T-cell (primary cell): ENCODE measurements at regions of chrX and their contacts with region 1.

Region 1: GRCh38 chrX:155216179-155216939 is at the start of gene VBP1:
- DNase-seq: peak; percentile 58 to 91 (median 84)
- ATAC-seq: peak; percentile 97 to 99 (median 98)
- H3K4me3 ChIP-seq: peak within 1 kb of the TSS; percentile 86 to 94
- H3K4me3 Mint-ChIP-seq: peak within 1 kb of the TSS; percentile 83 to 97 (median 94)
- H3K27ac ChIP-seq: peak within 1 kb of the TSS; percentile 76
- H3K27ac Mint-ChIP-seq: peak within 1 kb of the TSS; percentile 87 to 90
- H3K4me1 ChIP-seq: peaks cover 10 to 13% of the 10 kb centered on the region in 2 experiments
- H3K4me1 Mint-ChIP-seq: peaks cover 21 to 26% (median 25%) of the 10 kb centered on the region in 3 donors
- H3K27me3 ChIP-seq: no peaks in the 10 kb centered on the region
- H3K27me3 Mint-ChIP-seq: no peaks in the 10 kb centered on the region
- total RNA-seq, gene VBP1: 22.6 to 31.8 (median 26.0) TPM

Region 2: DNA sequence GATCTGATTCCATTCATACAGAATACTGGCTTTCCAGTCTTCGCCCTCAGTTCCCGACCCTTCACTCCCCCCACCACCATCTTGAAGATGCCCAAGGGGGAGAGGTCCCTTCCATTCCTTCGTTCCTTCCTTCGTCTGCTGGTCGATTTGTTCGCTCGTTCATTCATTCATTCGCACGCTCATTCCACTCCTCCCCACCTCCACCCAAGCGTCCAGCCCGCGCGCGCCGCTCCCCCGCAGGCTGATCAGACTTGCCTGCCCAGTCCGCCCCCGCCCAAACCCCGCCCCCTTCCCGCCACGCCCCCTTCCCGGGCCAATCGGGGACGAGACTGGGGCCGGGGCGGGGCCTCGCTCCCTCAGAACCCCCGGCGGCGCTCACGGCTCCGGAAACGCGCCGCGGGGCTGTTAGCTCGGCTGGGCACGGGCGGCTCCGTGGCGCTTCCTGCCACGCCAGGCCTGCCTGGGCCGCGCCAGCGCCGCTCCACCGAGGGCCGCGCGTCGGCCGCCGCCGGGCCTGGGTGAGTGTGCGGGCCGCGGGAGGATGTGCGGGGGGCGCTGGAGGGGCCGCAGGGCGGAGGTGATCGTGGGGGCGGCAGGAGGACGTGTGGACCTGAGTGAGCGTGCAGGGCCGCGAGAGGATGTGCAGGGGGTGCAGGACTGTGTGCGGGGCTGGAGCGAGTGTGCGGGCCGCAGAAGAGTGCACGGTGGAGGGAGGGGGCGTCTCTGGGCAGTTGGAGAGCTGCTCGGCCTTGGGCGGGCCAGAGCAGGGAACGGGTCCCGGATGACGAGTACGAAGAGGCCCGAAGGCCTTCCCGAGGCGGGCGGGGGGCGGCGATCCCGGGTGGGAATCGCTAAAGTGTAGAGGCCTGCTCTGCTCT is 1882.4 kb before region 1 on chrX and contains the start of gene ZNF275:
- CTCF ChIA-PET with region 1: interaction called in 1 of 2 experiments, 10 read pairs
- POLR2A ChIA-PET with region 1: no interaction called
- DNase-seq: peak; percentile 56 to 87 (median 72)
- ATAC-seq: peak; percentile 97 to 98 (median 97)
- H3K4me3 ChIP-seq: peak within 1 kb of the TSS; percentile 51 to 72
- H3K4me3 Mint-ChIP-seq: peak within 1 kb of the TSS; percentile 58 to 80 (median 76)
- H3K27ac ChIP-seq: no peak within 1 kb of the TSS
- H3K27ac Mint-ChIP-seq: peak within 1 kb of the TSS; percentile 52 to 65
- H3K4me1 ChIP-seq: peaks cover 10 to 37% of the 10 kb centered on the region in 2 experiments
- H3K4me1 Mint-ChIP-seq: peaks cover 40 to 45% (median 44%) of the 10 kb centered on the region in 3 donors
- H3K27me3 ChIP-seq: peaks cover 0 to 3% of the 10 kb centered on the region in 2 experiments
- H3K27me3 Mint-ChIP-seq: peaks cover 0 to 2% of the 10 kb centered on the region in 2 donors
- total RNA-seq, gene ZNF275: 14.4 to 17.6 (median 17.0) TPM

Region 3: DNA sequence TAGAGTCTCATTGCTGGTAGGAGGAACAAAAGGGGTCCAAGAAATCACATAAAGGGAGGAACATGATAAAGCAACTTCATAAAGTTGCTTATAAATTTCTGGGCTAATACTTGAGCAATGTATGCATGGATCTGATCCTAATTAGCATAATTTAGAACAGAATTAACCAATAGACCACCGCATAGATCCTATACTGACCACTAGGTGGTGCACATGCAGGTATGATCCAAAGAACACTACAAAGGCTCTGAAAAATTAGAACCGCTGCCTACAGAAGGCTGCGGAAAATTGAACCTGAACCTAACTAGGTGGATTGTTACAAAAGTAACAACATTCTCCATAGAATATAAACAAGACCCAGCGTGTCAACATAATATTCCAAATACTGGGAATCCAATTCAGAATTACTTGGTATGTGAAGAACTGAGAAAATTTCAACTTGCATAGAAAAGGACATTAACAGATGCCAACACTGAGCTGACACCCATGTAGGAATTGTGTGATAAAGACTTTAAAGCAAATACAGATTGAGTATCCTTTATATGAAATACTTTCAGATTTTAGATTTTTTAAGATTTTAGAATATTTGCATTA is 121.8 kb before region 1 on chrX:
- CTCF ChIA-PET with region 1: interaction called in 1 of 2 experiments, 11 read pairs
- POLR2A ChIA-PET with region 1: no interaction called
- DNase-seq: peak in 19 of 35 experiments; percentile 4 to 67 (median 20)
- ATAC-seq: peak; percentile 58 to 82 (median 71)
- H3K4me3 ChIP-seq: no peak overlapping the region
- H3K4me3 Mint-ChIP-seq: no peak overlapping the region
- H3K27ac ChIP-seq: no peak overlapping the region
- H3K27ac Mint-ChIP-seq: no peak overlapping the region
- H3K4me1 ChIP-seq: no peaks in the 10 kb centered on the region
- H3K4me1 Mint-ChIP-seq: peaks cover 3 to 5% (median 4%) of the 10 kb centered on the region in 3 donors
- H3K27me3 ChIP-seq: no peaks in the 10 kb centered on the region
- H3K27me3 Mint-ChIP-seq: peaks cover 0 to 3% of the 10 kb centered on the region in 2 donors

Region 4: GRCh38 chrX:155231163-155231562 is 14.8 kb after region 1 on chrX:
- CTCF ChIA-PET with region 1: no interaction called
- POLR2A ChIA-PET with region 1: no interaction called
- DNase-seq: no peak
- ATAC-seq: no peak
- H3K4me3 ChIP-seq: no peak overlapping the region
- H3K4me3 Mint-ChIP-seq: no peak overlapping the region
- H3K27ac ChIP-seq: no peak overlapping the region
- H3K27ac Mint-ChIP-seq: peak overlapping the region in 1 of 2 donors; percentile 24
- H3K4me1 ChIP-seq: no peaks in the 10 kb centered on the region
- H3K4me1 Mint-ChIP-seq: peaks cover 7 to 36% (median 15%) of the 10 kb centered on the region in 3 donors
- H3K27me3 ChIP-seq: no peaks in the 10 kb centered on the region
- H3K27me3 Mint-ChIP-seq: no peaks in the 10 kb centered on the region